Activated CD4-positive, alpha-beta T cell treated with anti-CD3 and anti-CD28 coated beads for 36 hours (primary cell): ENCODE measurements at regions of chr14 and their contacts with region 1.

Region 1: DNA sequence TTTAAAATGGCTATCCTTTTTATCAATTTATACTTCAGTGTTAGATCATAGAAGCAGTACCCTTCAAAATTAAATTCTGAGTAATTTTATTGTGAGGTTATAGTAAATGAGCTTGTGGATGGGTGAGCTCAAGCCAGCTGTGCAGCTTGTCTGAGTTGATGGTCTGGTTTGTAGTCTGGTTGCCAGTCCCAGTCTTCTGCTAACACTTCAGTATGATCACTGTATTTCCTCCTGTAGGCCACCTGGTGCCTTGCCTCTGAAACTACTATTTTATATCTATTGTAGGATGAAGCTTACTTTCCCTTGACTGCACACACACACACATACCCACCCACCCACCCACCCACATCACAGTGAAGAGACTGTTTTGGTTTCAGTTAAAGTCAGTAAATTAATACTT is 496.4 kb downstream of the PCNX1 start:
- DNase-seq: peak; percentile 43
- ATAC-seq: peak; percentile 78
- H3K4me3 Mint-ChIP-seq: no peak overlapping the region
- H3K27ac Mint-ChIP-seq: no peak overlapping the region
- H3K4me1 Mint-ChIP-seq: peaks cover 34% of the 10 kb centered on the region
- H3K27me3 Mint-ChIP-seq: no peaks in the 10 kb centered on the region

Region 2: GRCh38 chr14:71212683-71213107 is 191.0 kb before region 1 on chr14:
- CTCF ChIA-PET with region 1: no interaction called
- POLR2A ChIA-PET with region 1: no interaction called
- intact Hi-C with region 1: loop called (anchors 5 kb)
- DNase-seq: no peak
- ATAC-seq: no peak
- H3K4me3 Mint-ChIP-seq: no peak overlapping the region
- H3K27ac Mint-ChIP-seq: no peak overlapping the region
- H3K4me1 Mint-ChIP-seq: peaks cover 4% of the 10 kb centered on the region
- H3K27me3 Mint-ChIP-seq: no peaks in the 10 kb centered on the region

Region 3: GRCh38 chr14:71300566-71301330 is 102.9 kb before region 1 on chr14:
- CTCF ChIA-PET with region 1: no interaction called
- POLR2A ChIA-PET with region 1: no interaction called
- intact Hi-C with region 1: no loop called
- DNase-seq: no peak
- ATAC-seq: no peak
- H3K4me3 Mint-ChIP-seq: no peak overlapping the region
- H3K27ac Mint-ChIP-seq: no peak overlapping the region
- H3K4me1 Mint-ChIP-seq: peaks cover 3% of the 10 kb centered on the region
- H3K27me3 Mint-ChIP-seq: no peaks in the 10 kb centered on the region

Region 4: DNA sequence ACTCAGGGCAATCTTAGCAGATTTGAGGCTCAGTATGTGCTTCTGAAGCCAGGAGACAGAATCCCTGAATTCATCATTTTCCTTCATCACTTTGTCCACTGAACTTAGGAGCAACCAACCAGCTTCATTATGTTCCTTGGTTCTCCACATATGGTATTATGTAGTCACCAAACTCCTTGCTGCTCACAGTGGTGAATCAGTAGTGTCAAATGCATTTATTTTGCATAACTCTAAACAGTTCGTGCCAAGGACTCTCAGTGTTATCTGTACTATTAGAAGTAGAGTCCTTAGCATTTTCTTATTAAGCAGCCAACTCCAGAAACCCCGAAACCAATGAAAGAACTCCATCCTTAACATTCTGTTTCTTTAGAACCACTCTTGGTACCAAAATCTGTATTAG is 61.7 kb after region 1 on chr14:
- CTCF ChIA-PET with region 1: no interaction called
- POLR2A ChIA-PET with region 1: no interaction called
- intact Hi-C with region 1: no loop called
- DNase-seq: no peak
- ATAC-seq: no peak
- H3K4me3 Mint-ChIP-seq: no peak overlapping the region
- H3K27ac Mint-ChIP-seq: no peak overlapping the region
- H3K4me1 Mint-ChIP-seq: peaks cover 8% of the 10 kb centered on the region
- H3K27me3 Mint-ChIP-seq: no peaks in the 10 kb centered on the region

Region 5: DNA sequence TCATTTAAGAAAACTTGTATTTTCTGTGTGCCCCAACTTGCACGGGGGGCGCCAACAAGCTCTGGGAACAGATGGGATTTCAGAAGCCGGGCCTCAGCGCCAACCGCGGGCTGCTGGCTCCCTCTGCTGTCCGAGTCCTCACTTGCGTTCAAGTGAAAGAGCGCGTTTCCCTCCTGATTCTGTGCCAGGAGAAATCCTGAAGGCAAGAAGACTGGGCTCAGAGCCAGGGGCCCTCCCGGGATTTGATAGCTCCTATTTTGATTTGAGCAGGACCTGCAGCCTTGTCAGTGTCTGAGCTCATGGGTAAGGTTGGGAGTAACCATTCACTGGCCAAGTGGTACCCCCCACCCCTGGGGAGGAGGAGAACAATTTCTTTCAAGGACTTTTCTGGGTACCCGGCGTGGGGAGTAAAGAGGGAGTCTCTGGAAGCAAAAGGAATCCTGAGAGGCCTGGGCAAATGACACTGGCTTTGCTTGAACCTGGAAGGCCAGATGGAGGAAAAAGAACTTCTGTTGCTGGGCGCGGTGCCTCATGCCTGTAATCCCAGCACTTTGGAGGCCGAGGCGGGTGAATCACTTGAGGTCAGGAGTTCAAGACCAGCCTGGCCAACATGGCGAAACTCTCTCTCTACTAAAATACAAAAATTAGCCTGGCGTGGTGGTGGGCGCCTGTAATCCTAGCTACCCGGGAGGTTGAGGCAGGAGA is 349.6 kb after region 1 on chr14:
- CTCF ChIA-PET with region 1: interaction called, 3 read pairs
- POLR2A ChIA-PET with region 1: no interaction called
- intact Hi-C with region 1: loop called in 1 of 2 experiments (anchors 5 kb)
- DNase-seq: peak; percentile 84
- ATAC-seq: peak; percentile 51
- H3K4me3 Mint-ChIP-seq: no peak overlapping the region
- H3K27ac Mint-ChIP-seq: no peak overlapping the region
- H3K4me1 Mint-ChIP-seq: peaks cover 3% of the 10 kb centered on the region
- H3K27me3 Mint-ChIP-seq: no peaks in the 10 kb centered on the region